ENCODE measurements at regions of chrX and their contacts with region 1.

Region 1: GRCh38 chrX:106894392-106894909 is 8.7 kb downstream of the RIPPLY1 start:
- DNase-seq: peak; percentile 73
- ATAC-seq: peak; percentile 86
- H3K4me3 ChIP-seq: no peak overlapping the region
- H3K27ac ChIP-seq: no peak overlapping the region
- H3K4me1 ChIP-seq: 0 out of 2 replicates have a peak, but pooled peaks cover 3% of the 10 kb centered on the region
- H3K27me3 ChIP-seq: peaks cover 17% of the 10 kb centered on the region
- CTCF ChIP-seq: peak; percentile 87
- POLR2A ChIP-seq: no peak
- RAD21 ChIP-seq: peak; percentile 89

Region 2: DNA sequence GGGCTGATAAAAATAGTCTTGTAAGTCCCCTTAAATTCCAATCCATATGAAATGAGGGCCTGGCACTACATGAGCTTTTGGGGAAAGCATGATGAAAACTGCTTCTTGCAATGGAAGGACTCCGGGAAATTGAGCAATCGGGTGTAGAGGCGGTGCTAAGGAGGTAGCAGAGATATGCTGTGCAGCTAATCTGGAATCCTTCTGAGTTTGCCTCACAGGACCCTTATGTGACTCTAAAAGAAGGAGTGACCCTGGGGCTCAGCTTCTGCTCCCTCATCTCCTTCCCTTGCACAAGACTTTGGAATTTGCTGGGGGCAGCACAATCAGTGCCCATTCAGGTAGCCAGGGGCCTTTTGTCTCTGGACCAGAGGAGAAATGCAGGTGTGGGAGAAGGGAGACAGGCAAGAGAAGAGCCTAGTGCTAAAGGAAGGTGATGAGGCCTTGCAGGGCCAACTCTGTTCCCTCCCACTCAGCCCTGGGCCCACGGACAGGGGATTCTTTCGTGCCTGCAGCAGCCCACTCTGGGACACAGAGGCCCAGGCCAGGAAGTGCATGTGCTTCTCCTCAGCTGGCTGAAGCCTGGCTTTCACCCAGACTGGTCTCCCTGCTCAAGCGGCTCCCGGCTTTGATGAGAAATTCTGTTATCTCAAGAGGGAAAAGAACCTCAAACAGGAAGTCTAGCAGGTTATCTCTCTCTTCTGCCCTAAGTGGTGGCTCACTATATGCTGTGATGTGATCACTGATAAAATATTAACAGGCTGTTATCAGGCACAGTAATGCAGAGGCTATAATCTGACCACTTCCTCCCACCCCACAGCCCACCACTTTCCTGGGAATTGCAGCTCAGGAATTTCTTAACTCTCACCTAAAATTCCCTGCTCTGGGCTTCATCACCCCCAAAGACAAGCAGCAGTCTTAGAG is 38.9 kb after region 1 on chrX:
- CTCF ChIA-PET with region 1: interaction called, 3 read pairs
- POLR2A ChIA-PET with region 1: no interaction called
- dilution Hi-C with region 1: no loop called
- in situ Hi-C with region 1: no loop called
- intact Hi-C with region 1: loop called (anchors 2 kb)
- DNase-seq: peak; percentile 52
- ATAC-seq: peak; percentile 39
- H3K4me3 ChIP-seq: no peak overlapping the region
- H3K27ac ChIP-seq: peak overlapping the region; percentile 61; the same call in 1 of the 2 replicates
- H3K4me1 ChIP-seq: peaks cover 10% of the 10 kb centered on the region
- H3K27me3 ChIP-seq: peaks cover 2% of the 10 kb centered on the region; the same call in 1 of the 2 replicates
- CTCF ChIP-seq: no peak
- POLR2A ChIP-seq: no peak
- RAD21 ChIP-seq: no peak

Region 3: DNA sequence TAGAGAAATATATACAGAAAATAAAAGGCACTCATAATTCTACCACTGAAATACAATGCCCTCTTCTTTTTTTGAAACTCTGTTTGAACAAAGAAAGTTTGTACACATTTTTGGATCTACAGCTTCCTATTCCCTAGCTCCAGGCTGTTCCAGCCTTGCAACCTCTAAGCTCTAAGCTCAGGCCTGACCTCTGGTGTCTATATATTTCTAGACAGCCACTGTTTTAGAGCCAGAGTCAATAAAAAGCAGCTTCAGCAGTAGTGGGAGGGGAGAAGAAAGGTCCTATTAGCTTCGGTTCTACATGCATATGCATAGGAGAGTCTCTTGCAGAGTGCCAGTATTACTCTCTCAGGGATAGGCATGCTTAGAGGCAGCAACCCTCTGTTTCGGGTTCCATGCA is 65.5 kb after region 1 on chrX:
- CTCF ChIA-PET with region 1: interaction called, 18 read pairs
- POLR2A ChIA-PET with region 1: no interaction called
- dilution Hi-C with region 1: no loop called
- in situ Hi-C with region 1: no loop called
- intact Hi-C with region 1: no loop called
- DNase-seq: peak; percentile 33
- ATAC-seq: peak; percentile 60; the same call in 1 of the 2 replicates
- H3K4me3 ChIP-seq: no peak overlapping the region
- H3K27ac ChIP-seq: no peak overlapping the region
- H3K4me1 ChIP-seq: peaks cover 5% of the 10 kb centered on the region; the same call in 1 of the 2 replicates
- H3K27me3 ChIP-seq: 0 out of 2 replicates have a peak, but pooled peaks cover 3% of the 10 kb centered on the region
- CTCF ChIP-seq: peak; percentile 41
- POLR2A ChIP-seq: no peak
- RAD21 ChIP-seq: peak; percentile 31; the same call in 1 of the 2 replicates

Region 4: GRCh38 chrX:107118322-107119147 is 224.1 kb after region 1 on chrX and contains the start of gene RBM41:
- CTCF ChIA-PET with region 1: no interaction called
- POLR2A ChIA-PET with region 1: no interaction called
- dilution Hi-C with region 1: no loop called
- in situ Hi-C with region 1: no loop called
- intact Hi-C with region 1: loop called (anchors 10 kb)
- DNase-seq: peak; percentile 67
- ATAC-seq: peak; percentile 99
- H3K4me3 ChIP-seq: peak within 1 kb of the TSS; percentile 68
- H3K27ac ChIP-seq: peak within 1 kb of the TSS; percentile 87
- H3K4me1 ChIP-seq: no peaks in the 10 kb centered on the region; the same call in 1 of the 2 replicates
- H3K27me3 ChIP-seq: peaks cover 3% of the 10 kb centered on the region
- CTCF ChIP-seq: no peak
- POLR2A ChIP-seq: no peak
- RAD21 ChIP-seq: no peak
- total RNA-seq, gene RBM41: 8.6 and 11.9 TPM in 2 replicates

Region 5: GRCh38 chrX:107627838-107628661 is 733.6 kb after region 1 on chrX and contains the start of gene PRPS1:
- CTCF ChIA-PET with region 1: no interaction called
- POLR2A ChIA-PET with region 1: no interaction called
- dilution Hi-C with region 1: no loop called
- in situ Hi-C with region 1: no loop called
- intact Hi-C with region 1: loop called (anchors 10 kb)
- DNase-seq: peak; percentile 95
- ATAC-seq: peak; percentile 98
- H3K4me3 ChIP-seq: peak within 1 kb of the TSS; percentile 67
- H3K27ac ChIP-seq: peak within 1 kb of the TSS; percentile 48
- H3K4me1 ChIP-seq: no peaks in the 10 kb centered on the region
- H3K27me3 ChIP-seq: no peaks in the 10 kb centered on the region
- CTCF ChIP-seq: no peak
- POLR2A ChIP-seq: peak; percentile 76
- RAD21 ChIP-seq: no peak
- total RNA-seq, gene PRPS1: 137 and 162 TPM in 2 replicates

Region 6: DNA sequence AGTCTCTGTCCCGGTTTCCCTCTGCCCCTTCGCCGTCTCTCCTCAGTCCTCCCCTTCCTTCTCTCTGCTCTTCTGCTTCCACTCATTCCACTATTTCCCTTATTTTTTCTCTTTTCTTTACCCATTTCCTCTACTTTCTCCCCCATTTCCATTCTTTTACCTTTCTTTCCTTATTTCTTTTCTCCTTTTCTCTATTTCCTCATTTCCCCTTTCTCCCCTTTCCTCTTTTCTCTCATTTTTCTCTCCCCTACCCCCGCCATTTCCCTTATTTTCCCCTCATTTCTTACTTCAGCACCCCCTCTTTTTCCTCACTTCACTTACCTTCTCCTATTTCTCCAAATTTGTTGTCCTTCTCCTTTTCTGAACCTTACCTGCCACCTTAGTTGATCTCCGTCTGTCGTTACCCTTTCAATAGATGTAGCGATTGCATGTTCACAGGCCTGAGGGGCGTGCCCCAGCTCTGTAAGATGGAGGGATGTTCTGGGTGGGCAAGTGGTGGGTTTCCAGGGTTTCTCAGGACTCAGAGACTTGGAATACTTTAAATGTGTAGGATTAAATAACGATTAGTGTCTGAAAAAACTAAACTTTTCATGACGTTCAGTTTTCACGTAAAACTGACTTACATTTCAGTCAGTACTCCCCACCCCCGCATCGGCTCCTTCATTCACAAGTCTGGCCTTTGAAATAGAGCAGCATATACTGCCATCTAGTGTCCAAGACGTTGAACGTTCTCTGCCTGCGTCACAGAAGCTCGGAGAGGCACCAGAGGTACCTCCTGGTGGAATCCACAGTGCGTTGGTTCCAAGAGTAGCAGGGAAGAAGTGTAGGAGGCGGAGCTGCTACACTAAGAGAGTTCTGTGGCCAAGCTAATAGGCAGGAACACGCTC is 882.4 kb after region 1 on chrX:
- CTCF ChIA-PET with region 1: no interaction called
- POLR2A ChIA-PET with region 1: no interaction called
- dilution Hi-C with region 1: no loop called
- in situ Hi-C with region 1: no loop called
- intact Hi-C with region 1: loop called (anchors 5 kb)
- DNase-seq: peak; percentile 87
- ATAC-seq: peak; percentile 88
- H3K4me3 ChIP-seq: peak overlapping the region; percentile 14; the same call in 1 of the 2 replicates
- H3K27ac ChIP-seq: no peak overlapping the region
- H3K4me1 ChIP-seq: no peaks in the 10 kb centered on the region
- H3K27me3 ChIP-seq: peaks cover 31% of the 10 kb centered on the region
- CTCF ChIP-seq: peak; percentile 80
- POLR2A ChIP-seq: no peak
- RAD21 ChIP-seq: peak; percentile 82